Activated CD4-positive, alpha-beta memory T cell treated with anti-CD3 and anti-CD28 coated beads, Interleukin-2, amount 10 ng/mL, durations not matched to agents 7 days and 5 days (primary cell): ENCODE measurements at regions of chr4 and their contacts with region 1.

Region 1: GRCh38 chr4:158722917-158723793 is at the start of gene PPID:
- DNase-seq: peak; percentile 88
- H3K4me3 Mint-ChIP-seq: peak within 1 kb of the TSS; percentile 85
- H3K27ac Mint-ChIP-seq: peak within 1 kb of the TSS; percentile 98
- H3K4me1 Mint-ChIP-seq: peaks cover 72% of the 10 kb centered on the region
- H3K27me3 Mint-ChIP-seq: no peaks in the 10 kb centered on the region
- total RNA-seq, gene PPID: 46.2 to 47.5 TPM

Region 2: GRCh38 chr4:158671915-158672806 is 51.0 kb before region 1 on chr4 and contains the start of gene ETFDH:
- CTCF ChIA-PET with region 1: interaction called, 9 read pairs
- POLR2A ChIA-PET with region 1: interaction called, 13 read pairs
- DNase-seq: peak; percentile 99
- H3K4me3 Mint-ChIP-seq: peak within 1 kb of the TSS; percentile 84
- H3K27ac Mint-ChIP-seq: peak within 1 kb of the TSS; percentile 90
- H3K4me1 Mint-ChIP-seq: peaks cover 32% of the 10 kb centered on the region
- H3K27me3 Mint-ChIP-seq: no peaks in the 10 kb centered on the region
- total RNA-seq, gene ETFDH: 22.0 to 24.3 TPM

Region 3: GRCh38 chr4:158768555-158769174 is 45.5 kb after region 1 on chr4 and contains the start of gene FNIP2:
- CTCF ChIA-PET with region 1: interaction called, 3 read pairs
- POLR2A ChIA-PET with region 1: interaction called, 18 read pairs
- DNase-seq: peak; percentile 71
- H3K4me3 Mint-ChIP-seq: peak within 1 kb of the TSS; percentile 99
- H3K27ac Mint-ChIP-seq: peak within 1 kb of the TSS; percentile 90
- H3K4me1 Mint-ChIP-seq: peaks cover 43% of the 10 kb centered on the region
- H3K27me3 Mint-ChIP-seq: no peaks in the 10 kb centered on the region
- total RNA-seq, gene FNIP2: 16.9 to 17.3 TPM